CD4-positive, alpha-beta T cell (primary cell): ENCODE measurements at regions of chr3 and their contacts with region 1.

Region 1: DNA sequence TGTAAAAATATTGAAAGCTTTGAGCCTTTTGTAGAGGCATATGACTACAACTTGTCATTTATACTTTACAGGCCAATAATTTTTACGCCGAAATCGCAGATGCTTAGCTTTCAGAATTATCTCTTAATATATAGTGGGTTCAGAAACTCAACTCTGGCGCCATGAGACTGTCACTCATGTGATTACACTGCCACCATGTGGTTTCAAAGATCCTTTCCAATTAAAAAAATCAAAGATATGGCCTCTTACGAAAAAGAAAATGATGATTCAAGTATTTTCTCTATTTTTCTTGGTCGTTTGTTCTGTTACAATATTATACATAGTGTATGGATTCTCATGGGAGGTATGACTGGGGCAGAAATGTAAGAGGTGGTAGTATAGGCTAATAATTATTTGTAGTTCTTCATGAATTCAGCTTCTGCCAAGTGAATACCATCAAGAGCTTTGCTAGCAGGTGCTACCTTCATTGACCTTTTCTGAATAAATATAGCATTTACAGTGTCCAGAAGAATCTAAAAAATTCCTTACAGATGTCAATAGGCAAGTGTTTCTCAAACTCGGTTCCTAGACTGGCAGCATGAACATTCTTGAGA is 751.7 kb upstream of the GOLIM4 start:
- DNase-seq: peak in 2 of 14 experiments; percentile 2 to 5
- ATAC-seq: no peak
- H3K4me3 ChIP-seq: no peak overlapping the region
- H3K4me3 Mint-ChIP-seq: no peak overlapping the region
- H3K27ac ChIP-seq: no peak overlapping the region
- H3K27ac Mint-ChIP-seq: no peak overlapping the region
- H3K4me1 ChIP-seq: no peaks in the 10 kb centered on the region
- H3K4me1 Mint-ChIP-seq: no peaks in the 10 kb centered on the region
- H3K27me3 ChIP-seq: no peaks in the 10 kb centered on the region
- H3K27me3 Mint-ChIP-seq: peaks cover 10% of the 10 kb centered on the region
- CTCF ChIP-seq: no peak

Region 2: DNA sequence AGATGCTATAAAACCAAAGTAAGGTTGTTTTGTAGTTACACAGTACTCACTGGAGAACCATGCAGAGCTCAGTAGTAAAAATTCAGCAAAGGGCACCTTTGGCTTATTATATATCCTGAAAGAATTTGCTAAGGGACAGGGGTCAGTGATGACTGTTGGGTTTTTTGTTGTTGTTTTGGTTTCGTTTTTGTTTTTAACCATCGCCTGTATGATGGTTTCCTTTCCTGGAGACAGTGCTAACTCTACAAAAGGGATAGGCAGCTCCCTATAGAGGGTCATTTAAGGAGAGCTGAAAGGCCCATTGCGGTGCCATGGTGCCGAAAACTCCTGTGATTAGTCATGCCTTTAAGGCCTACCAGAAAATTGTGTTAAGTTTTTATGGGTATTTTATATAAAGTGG is 633.5 kb before region 1 on chr3:
- CTCF ChIA-PET with region 1: no interaction called
- POLR2A ChIA-PET with region 1: no interaction called
- intact Hi-C with region 1: loop called in 1 of 2 experiments (anchors 10 kb)
- DNase-seq: peak in 1 of 14 experiments; percentile 18
- ATAC-seq: no peak
- H3K4me3 ChIP-seq: peak overlapping the region; percentile 4
- H3K4me3 Mint-ChIP-seq: peak overlapping the region; percentile 36
- H3K27ac ChIP-seq: no peak overlapping the region
- H3K27ac Mint-ChIP-seq: no peak overlapping the region
- H3K4me1 ChIP-seq: no peaks in the 10 kb centered on the region
- H3K4me1 Mint-ChIP-seq: peaks cover 7% of the 10 kb centered on the region
- H3K27me3 ChIP-seq: no peaks in the 10 kb centered on the region
- H3K27me3 Mint-ChIP-seq: no peaks in the 10 kb centered on the region
- CTCF ChIP-seq: no peak